Activated T-helper 1 cell treated with anti-CD3 and anti-CD28 coated beads, Interleukin-12 subunit alpha, Interleukin-12 subunit beta, Interleukin-2, Interleukin-4 antibody, amounts not matched to agents 30 ng/mL and 10 ng/mL and 1 ng/mL, durations not matched to agents 14 hours and 24 hours and 36 hours (primary cell): ENCODE measurements at regions of chr10 and their contacts with region 1.

Region 1: DNA sequence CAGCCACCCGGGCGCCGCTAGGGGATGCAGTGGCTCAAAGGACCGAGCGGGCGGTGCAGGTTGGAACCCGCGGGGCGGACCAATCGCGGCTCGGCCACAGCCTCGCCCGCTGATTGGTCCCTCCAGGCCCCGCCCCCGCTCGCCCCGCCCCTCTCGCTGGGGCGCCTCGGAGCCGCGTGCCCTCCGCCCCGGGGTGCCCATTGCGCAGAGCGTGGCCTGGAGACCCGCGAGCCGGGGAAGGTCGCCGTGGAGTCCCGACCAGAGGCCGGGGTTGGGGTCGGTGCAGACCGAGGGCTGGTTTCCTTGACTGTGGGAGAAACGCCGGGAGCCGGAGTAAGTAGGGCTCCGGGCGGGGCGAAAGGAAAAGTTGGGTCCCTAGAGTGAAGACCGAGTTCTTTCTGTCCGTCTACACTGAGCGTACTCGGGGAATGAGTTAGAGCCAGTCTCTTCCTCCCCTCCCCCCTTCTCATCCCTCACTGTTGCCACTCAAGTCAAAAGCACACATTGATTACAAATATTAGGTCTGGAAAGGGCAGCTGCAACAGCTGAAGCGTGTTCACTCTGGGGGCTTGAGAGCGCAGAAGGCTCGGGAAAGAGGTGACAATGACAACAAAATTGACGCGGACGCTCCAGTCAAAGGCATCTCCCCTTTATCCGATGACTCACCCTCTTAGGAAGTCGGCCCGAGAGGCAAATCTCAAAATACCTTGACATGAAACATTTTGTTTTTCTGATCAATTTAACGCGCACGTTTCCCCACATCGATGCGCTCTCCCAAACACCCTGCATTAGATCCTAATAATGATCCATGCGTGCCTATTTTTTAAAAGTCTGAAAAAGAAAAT is 820 bp upstream of the GATA3 start:
- DNase-seq: peak; percentile 90
- H3K4me3 Mint-ChIP-seq: peak overlapping the region; percentile 99
- H3K27ac Mint-ChIP-seq: peak overlapping the region; percentile 99
- H3K4me1 Mint-ChIP-seq: peaks cover 44% of the 10 kb centered on the region
- H3K27me3 Mint-ChIP-seq: peaks cover 22% of the 10 kb centered on the region

Region 2: DNA sequence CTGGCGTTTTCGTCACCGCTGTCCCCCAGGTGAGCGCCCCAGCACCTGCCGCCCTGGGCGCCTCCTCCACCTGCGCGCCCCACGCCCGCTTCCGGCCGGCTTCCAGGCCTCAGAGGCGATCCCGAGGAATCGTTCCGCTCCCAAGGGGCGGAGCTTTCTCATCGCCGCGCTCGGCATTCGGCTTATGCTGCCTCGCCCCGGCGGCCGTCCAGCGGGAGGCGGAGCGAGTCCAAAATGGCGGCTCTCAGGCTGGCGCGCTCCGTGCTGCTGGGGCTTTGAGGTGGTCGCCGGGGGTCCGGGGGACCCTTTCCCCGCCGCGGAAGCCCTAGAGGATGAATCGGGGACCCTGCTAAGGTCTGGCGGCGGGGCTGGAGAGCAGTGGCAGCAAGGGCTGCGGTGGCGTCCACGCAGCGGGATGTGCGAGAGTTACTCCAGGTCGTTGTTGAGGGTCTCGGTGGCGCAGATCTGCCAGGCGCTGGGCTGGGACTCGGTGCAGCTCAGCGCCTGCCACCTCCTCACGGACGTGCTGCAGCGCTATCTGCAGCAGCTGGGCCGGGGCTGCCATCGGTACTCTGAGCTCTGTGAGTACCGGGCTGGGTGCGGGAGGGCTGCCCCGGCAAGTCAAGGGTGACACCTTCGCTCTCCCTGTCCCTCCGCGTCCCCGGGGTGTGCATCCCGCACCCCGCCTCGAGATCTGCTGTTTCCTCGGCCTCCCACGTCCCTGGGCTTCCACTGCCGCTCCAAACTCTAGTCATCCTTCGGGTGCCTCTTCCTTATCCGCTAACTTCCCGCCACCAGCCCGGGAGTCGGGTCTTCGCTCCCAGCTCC is 235.2 kb before region 1 on chr10 and contains the start of gene TAF3:
- intact Hi-C with region 1: loop called (anchors 2 kb)
- DNase-seq: peak; percentile 92
- H3K4me3 Mint-ChIP-seq: peak within 1 kb of the TSS; percentile 97
- H3K27ac Mint-ChIP-seq: peak within 1 kb of the TSS; percentile 91
- H3K4me1 Mint-ChIP-seq: peaks cover 21% of the 10 kb centered on the region
- H3K27me3 Mint-ChIP-seq: peaks cover 20% of the 10 kb centered on the region
- total RNA-seq, gene TAF3: 15.1 and 16.3 TPM in 2 replicates

Region 3: GRCh38 chr10:8159341-8160165 is 105.9 kb after region 1 on chr10:
- intact Hi-C with region 1: no loop called
- DNase-seq: no peak
- H3K4me3 Mint-ChIP-seq: no peak overlapping the region
- H3K27ac Mint-ChIP-seq: no peak overlapping the region
- H3K4me1 Mint-ChIP-seq: peaks cover 18% of the 10 kb centered on the region
- H3K27me3 Mint-ChIP-seq: peaks cover 16% of the 10 kb centered on the region

Region 4: GRCh38 chr10:8183241-8183704 is 129.6 kb after region 1 on chr10:
- intact Hi-C with region 1: loop called (anchors 5 kb)
- DNase-seq: peak; percentile 27
- H3K4me3 Mint-ChIP-seq: peak overlapping the region; percentile 27
- H3K27ac Mint-ChIP-seq: peak overlapping the region; percentile 13
- H3K4me1 Mint-ChIP-seq: peaks cover 23% of the 10 kb centered on the region
- H3K27me3 Mint-ChIP-seq: peaks cover 11% of the 10 kb centered on the region

Region 5: DNA sequence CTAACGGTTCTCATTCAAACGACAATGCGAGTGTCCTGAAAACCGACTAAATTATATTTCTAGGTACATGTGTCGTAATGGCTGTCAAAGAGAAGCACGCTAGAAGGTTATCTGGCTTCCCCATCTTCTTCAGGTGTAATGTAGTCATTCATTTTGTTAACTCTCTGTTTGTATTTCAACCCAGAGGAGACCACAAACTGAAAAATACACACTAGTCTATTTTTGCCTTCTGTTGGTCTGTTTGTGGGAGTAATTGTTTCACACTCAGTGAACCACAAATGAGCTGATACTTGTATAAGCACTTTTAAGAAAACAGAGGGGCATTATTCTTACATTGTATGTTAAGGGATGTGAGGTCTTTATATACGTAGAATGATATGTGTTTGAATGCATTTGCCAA is 306.7 kb after region 1 on chr10:
- intact Hi-C with region 1: loop called (anchors 2 kb)
- DNase-seq: no peak
- H3K4me3 Mint-ChIP-seq: peak overlapping the region; percentile 32
- H3K27ac Mint-ChIP-seq: peak overlapping the region; percentile 78
- H3K4me1 Mint-ChIP-seq: peaks cover 56% of the 10 kb centered on the region
- H3K27me3 Mint-ChIP-seq: peaks cover 9% of the 10 kb centered on the region

Region 6: DNA sequence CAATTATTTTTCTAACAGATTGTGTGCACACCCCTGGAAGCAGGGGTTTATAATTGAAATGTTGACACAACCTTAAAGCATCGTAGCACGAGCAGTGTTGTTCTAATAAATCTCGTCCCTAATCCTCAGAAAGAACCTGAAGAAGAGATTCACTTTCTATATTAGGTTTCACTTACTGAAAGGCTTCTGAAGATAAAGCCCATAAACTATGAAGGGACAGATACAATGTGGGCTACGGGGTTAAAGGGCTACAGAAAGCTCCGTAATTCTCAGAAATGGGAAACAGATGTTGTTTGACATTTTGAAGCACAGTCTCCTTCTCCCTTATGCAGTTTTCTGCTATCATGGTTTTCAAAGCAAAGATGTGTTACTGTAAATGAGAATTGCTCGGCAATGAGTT is 480.4 kb after region 1 on chr10:
- intact Hi-C with region 1: no loop called
- DNase-seq: no peak
- H3K4me3 Mint-ChIP-seq: no peak overlapping the region
- H3K27ac Mint-ChIP-seq: no peak overlapping the region
- H3K4me1 Mint-ChIP-seq: no peaks in the 10 kb centered on the region
- H3K27me3 Mint-ChIP-seq: peaks cover 7% of the 10 kb centered on the region

Region 7: DNA sequence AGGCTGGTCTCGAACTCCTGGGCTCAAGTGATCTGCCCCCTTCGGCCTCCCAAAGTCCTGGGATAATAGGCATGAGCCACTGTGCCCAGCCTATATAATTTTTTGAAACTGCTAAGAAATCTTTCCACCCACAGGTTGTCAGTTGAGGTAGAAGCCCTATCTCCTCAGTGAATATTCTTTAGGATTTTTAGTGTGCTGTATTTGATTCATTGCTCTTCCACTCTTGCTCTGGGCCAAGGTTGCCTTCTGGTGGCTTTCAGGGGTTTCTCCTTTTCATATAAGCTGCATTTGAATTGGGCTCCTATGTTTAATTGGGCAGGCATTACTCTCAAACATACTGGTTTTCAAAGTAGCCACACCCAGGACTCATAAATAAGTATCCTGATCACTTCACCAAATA is 932.0 kb after region 1 on chr10:
- intact Hi-C with region 1: loop called (anchors 5 kb)
- DNase-seq: no peak
- H3K4me3 Mint-ChIP-seq: no peak overlapping the region
- H3K27ac Mint-ChIP-seq: no peak overlapping the region
- H3K4me1 Mint-ChIP-seq: peaks cover 4% of the 10 kb centered on the region
- H3K27me3 Mint-ChIP-seq: peaks cover 3% of the 10 kb centered on the region

Region 8: GRCh38 chr10:9302120-9302746 is 1248.6 kb after region 1 on chr10:
- intact Hi-C with region 1: loop called (anchors 2 kb)
- DNase-seq: no peak
- H3K4me3 Mint-ChIP-seq: no peak overlapping the region
- H3K27ac Mint-ChIP-seq: no peak overlapping the region
- H3K4me1 Mint-ChIP-seq: no peaks in the 10 kb centered on the region
- H3K27me3 Mint-ChIP-seq: peaks cover 6% of the 10 kb centered on the region